ENCODE measurements at regions of chr15 and their contacts with region 1.

Region 1: DNA sequence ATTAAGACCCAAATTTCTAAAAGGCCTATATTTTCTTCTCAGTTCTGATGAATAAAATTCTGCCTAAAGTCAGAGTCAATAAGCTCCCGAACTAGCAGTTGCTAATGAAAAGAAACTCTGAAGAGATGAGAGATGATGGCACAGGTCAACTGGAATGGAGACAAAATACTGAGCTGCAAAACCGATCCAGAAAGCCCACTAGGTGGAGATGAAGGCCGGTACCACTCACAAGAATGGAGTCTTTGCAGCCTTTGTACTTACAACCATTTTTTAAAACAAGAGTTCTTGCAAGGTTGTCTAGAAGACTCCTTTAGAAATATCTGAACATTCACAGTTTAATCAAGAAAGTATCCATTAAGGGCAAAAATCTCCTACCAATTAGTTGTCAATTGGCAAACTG is 119.9 kb upstream of the TJP1 start:
- DNase-seq: peak; percentile 35
- ATAC-seq: no peak
- H3K4me3 ChIP-seq: no peak overlapping the region
- H3K27ac ChIP-seq: no peak overlapping the region
- H3K4me1 ChIP-seq: peaks cover 21% of the 10 kb centered on the region
- H3K27me3 ChIP-seq: no peaks in the 10 kb centered on the region
- CTCF ChIP-seq: peak; percentile 62

Region 2: DNA sequence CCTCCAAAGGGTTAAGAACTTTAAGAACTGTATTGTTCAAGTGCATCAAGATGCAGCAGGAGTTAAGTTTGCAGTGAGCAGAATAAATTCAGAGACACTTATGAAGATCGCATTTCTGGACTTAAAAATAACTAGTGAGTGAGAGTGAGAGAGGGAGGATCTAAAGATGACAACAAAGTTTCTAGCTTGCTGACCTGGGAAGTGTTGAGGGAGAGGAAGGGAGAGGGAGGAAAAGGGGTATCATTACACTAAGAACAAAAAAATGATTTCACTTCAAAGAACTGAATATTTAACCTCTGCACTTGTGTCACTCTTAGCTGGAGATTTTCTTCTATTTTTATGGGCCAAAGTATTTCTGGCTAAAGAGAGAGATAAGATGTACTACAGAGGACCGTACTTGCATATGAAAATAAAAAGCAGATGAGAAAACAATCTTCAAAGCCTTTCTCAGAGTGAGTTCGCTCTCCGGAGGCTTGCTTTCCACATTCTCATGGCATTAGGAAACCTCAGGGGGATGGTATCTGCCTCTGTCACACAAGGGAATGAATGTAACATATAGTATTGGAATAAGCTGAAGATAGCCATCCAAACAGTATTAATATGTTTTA is 28.5 kb before region 1 on chr15:
- CTCF ChIA-PET with region 1: no interaction called
- POLR2A ChIA-PET with region 1: no interaction called
- intact Hi-C with region 1: no loop called
- DNase-seq: no peak
- ATAC-seq: no peak
- H3K4me3 ChIP-seq: no peak overlapping the region
- H3K27ac ChIP-seq: no peak overlapping the region
- H3K4me1 ChIP-seq: peaks cover 32% of the 10 kb centered on the region
- H3K27me3 ChIP-seq: no peaks in the 10 kb centered on the region
- CTCF ChIP-seq: no peak

Region 3: DNA sequence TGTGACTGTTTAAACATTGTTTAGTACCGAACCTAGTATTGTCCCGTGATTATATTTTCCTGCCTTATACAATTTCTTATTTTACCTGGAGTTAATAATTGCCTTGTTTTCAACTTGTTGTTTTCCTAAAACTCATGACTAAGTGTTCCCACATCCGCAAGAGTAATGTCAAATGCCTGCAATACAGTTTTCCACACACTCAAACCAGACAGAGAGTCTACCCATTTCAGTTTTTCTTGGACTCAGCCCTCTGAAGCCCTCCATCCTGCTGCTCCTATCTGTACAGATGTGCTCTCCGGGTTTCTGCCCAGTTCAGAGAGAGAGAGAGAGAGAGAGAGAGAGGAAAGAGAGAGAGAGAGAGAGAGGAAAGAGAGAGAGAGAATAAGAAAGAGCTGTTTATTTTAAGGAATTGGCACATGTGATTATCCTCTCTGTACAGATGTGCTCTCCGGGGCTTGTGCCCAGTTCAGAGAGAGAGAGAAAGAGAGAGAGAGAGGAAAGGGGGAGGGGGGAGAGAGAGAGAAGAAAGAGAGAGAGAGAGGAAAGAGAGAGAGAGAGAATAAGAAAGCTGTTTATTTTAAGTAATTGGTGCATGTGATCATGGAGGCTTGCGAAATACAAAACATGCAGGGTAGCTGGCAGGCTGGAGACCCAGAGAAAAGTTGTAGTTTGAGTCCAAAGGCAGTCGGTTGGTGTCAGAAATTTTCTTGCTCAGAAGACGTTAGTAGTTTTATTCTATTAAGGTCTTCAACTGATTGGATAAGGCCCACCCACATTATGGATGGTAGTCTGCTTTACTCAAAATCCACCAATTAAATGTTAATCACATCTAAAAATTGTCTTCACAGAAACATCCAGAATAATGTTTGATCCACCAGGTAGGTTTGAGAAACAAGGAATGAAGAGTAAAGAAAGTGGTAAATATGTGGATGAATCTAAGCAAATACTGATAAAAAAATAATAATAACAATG is 36.6 kb after region 1 on chr15:
- CTCF ChIA-PET with region 1: no interaction called
- POLR2A ChIA-PET with region 1: no interaction called
- intact Hi-C with region 1: no loop called
- DNase-seq: no peak
- ATAC-seq: no peak
- H3K4me3 ChIP-seq: no peak overlapping the region
- H3K27ac ChIP-seq: no peak overlapping the region
- H3K4me1 ChIP-seq: 0 out of 2 replicates have a peak, but pooled peaks cover 6% of the 10 kb centered on the region
- H3K27me3 ChIP-seq: no peaks in the 10 kb centered on the region
- CTCF ChIP-seq: no peak

Region 4: DNA sequence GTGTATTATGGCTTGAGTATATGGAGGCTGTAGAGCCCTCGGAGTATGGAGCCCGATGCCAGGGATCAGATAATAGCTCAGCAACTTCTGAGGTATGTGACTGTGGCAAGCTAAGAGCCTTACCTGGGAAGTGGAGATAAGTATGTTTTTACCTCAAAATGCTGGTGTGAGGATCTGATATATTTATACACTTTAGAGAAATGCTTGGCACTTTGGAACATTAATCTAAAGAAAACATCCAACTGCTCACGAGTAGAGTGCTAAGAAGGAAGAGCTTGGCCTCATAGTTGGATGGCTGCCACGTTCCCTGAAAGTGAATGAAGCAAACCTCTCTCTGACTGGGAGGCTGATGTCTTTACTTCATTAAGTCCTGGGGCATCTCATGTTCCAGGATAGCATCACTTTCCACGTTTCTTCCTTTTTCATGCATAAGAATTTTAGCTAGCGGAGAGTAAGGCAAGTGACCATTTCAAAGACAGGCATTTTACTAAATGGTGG is 81.7 kb after region 1 on chr15:
- CTCF ChIA-PET with region 1: no interaction called
- POLR2A ChIA-PET with region 1: no interaction called
- intact Hi-C with region 1: loop called (anchors 5 kb)
- DNase-seq: no peak
- ATAC-seq: no peak
- H3K4me3 ChIP-seq: no peak overlapping the region
- H3K27ac ChIP-seq: no peak overlapping the region
- H3K4me1 ChIP-seq: no peaks in the 10 kb centered on the region
- H3K27me3 ChIP-seq: no peaks in the 10 kb centered on the region
- CTCF ChIP-seq: no peak

Measured in PC-3 (cell line).